MCF 10A (cell line): ENCODE measurements at regions of chr2 and their contacts with region 1.

Region 1: DNA sequence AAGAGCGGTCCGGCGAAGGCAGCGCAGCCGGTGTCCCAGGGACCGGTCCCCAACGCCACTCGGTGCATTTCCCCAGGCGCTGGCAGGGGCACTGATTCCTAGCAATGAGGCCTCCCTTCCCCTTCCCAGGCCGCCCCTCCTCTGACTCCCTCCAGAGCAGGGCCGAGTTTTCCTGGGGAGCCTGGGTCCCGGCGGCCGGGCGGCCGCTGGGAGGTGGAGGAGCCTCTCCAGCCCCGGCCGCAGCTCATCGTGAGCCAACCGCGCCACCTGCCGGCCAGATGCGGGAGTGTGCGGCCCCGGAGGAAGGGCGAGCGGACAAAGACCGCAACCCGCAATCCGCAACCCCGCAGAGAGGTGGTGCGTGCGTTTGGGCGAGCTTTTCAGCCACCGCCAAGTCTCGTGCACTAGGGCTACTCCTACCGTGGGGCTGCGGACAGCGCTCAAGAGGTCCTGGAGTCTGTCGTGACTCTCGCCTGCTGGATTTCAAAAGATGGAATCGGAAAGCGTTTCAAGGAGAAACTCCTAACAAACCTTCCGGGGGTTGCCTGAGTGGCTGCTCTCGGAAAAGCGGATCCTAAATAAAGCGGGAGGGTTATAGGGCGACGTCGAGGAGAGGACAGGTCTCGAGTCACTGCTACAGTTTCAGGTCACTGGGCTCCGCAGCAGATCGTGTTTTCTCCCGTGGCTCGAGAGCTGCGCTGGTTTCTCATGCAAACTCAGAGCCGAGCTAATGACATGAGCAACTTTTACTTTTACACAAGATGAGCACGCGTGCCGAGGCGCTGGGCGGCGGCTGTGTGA is 1.5 kb upstream of the EPHA4 start:
- DNase-seq: peak; percentile 80
- H3K4me3 Mint-ChIP-seq: peak overlapping the region; percentile 96
- H3K27ac Mint-ChIP-seq: peak overlapping the region; percentile 41
- H3K4me1 Mint-ChIP-seq: peaks cover 10% of the 10 kb centered on the region
- H3K27me3 Mint-ChIP-seq: no peaks in the 10 kb centered on the region
- CTCF ChIP-seq: peak; percentile 94

Region 2: GRCh38 chr2:219968685-219969345 is 1604.8 kb before region 1 on chr2:
- CTCF ChIA-PET with region 1: no interaction called
- POLR2A ChIA-PET with region 1: no interaction called
- intact Hi-C with region 1: loop called (anchors 1 kb)
- DNase-seq: peak; percentile 97
- H3K4me3 Mint-ChIP-seq: peak overlapping the region; percentile 35
- H3K27ac Mint-ChIP-seq: peak overlapping the region; percentile 61
- H3K4me1 Mint-ChIP-seq: peaks cover 17% of the 10 kb centered on the region
- H3K27me3 Mint-ChIP-seq: no peaks in the 10 kb centered on the region
- CTCF ChIP-seq: no peak

Region 3: DNA sequence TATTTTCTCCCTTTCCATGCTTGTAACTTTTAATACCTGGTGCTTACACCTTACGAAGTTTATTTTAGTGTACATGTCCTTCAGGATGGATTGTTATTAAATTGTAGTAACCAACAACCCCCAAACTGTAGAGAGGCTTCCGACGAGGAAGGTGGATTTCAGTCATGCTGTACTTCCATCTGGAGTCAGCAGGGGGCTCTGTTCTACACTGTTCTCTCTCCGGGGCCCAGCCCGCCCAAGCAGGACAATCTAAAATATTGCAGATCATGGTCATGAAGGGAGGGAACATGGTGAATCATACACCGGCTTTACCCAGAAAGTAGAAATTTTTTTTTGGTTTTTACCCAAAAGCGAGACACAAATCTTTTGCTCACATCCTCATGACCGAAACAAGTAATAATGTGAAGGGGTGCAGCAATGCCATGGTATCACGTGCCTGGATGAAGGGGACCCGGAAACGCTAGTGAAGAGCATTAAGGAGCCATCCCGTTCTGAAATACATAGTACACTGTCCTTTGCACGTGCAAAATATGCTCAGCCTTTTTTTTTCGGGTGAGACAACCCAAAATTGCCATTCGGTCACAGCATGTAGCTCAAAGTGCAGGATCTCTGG is 886.3 kb before region 1 on chr2:
- CTCF ChIA-PET with region 1: interaction called, 6 read pairs
- POLR2A ChIA-PET with region 1: no interaction called
- intact Hi-C with region 1: loop called (anchors 1 kb)
- DNase-seq: peak; percentile 68
- H3K4me3 Mint-ChIP-seq: no peak overlapping the region
- H3K27ac Mint-ChIP-seq: no peak overlapping the region
- H3K4me1 Mint-ChIP-seq: peaks cover 5% of the 10 kb centered on the region
- H3K27me3 Mint-ChIP-seq: no peaks in the 10 kb centered on the region
- CTCF ChIP-seq: peak; percentile 93

Region 4: DNA sequence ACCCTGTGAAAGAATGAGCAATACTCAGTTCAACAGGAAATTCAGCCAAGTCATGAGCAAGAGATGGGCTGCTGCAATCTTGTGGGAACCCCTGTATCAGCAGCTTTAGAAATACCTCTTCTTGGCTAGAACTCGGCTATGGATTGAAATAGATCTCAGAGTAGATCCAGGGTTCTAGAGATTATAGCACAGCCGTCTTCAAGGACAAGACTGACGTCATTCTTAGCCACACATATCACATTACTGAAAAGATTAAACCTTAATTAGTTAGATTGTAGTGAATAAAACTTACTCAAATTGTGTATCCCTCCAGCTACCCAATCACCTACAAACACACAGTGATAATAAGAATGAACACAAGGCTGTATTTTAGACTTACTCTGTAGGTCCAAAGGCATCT is 777.9 kb before region 1 on chr2:
- CTCF ChIA-PET with region 1: no interaction called
- POLR2A ChIA-PET with region 1: no interaction called
- intact Hi-C with region 1: loop called (anchors 5 kb)
- DNase-seq: no peak
- H3K4me3 Mint-ChIP-seq: no peak overlapping the region
- H3K27ac Mint-ChIP-seq: no peak overlapping the region
- H3K4me1 Mint-ChIP-seq: no peaks in the 10 kb centered on the region
- H3K27me3 Mint-ChIP-seq: no peaks in the 10 kb centered on the region
- CTCF ChIP-seq: no peak

Region 5: GRCh38 chr2:221309892-221310583 is 263.6 kb before region 1 on chr2:
- CTCF ChIA-PET with region 1: interaction called, 3 read pairs
- POLR2A ChIA-PET with region 1: no interaction called
- intact Hi-C with region 1: loop called (anchors 10 kb)
- DNase-seq: no peak
- H3K4me3 Mint-ChIP-seq: no peak overlapping the region
- H3K27ac Mint-ChIP-seq: no peak overlapping the region
- H3K4me1 Mint-ChIP-seq: no peaks in the 10 kb centered on the region
- H3K27me3 Mint-ChIP-seq: no peaks in the 10 kb centered on the region
- CTCF ChIP-seq: no peak

Region 6: GRCh38 chr2:221606424-221606823 is 32.8 kb after region 1 on chr2:
- CTCF ChIA-PET with region 1: no interaction called
- POLR2A ChIA-PET with region 1: no interaction called
- intact Hi-C with region 1: no loop called
- DNase-seq: no peak
- H3K4me3 Mint-ChIP-seq: no peak overlapping the region
- H3K27ac Mint-ChIP-seq: no peak overlapping the region
- H3K4me1 Mint-ChIP-seq: peaks cover 14% of the 10 kb centered on the region
- H3K27me3 Mint-ChIP-seq: no peaks in the 10 kb centered on the region
- CTCF ChIP-seq: no peak

Region 7: DNA sequence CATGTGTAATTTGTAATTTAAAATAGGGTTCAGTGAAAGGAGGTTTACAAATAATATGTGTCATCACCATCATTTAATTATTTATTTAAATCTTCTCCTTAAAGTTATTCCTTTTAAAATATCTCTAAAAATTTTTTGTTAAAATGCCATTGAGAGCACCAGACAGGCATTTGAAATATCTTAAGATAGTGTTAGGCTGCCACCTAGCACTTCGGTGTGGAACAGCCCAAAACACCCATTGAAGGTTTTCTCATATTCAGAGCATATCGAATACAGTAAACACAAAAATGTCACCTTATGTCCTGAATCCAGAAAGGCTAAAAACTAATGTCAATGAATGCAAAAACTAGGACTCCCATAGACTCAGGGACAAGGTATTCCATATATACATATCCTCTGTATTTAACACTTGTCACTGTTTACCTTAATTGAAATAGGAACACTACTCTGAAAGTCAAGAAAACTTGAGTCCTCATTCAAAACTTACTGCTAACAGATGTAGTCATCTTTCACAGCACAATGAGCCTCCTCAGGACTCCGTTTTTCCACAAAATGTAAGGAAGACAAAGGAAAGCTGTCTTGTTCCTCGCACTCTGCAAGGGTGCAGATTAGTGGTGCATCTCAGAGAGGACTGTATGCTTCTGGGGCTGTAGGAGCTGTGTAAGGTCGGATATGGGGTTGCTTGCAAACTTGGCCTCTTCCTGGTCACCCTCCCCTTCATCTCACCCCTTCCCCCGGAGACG is 395.6 kb after region 1 on chr2:
- CTCF ChIA-PET with region 1: interaction called, 7 read pairs
- POLR2A ChIA-PET with region 1: no interaction called
- intact Hi-C with region 1: loop called (anchors 1 kb)
- DNase-seq: peak; percentile 54
- H3K4me3 Mint-ChIP-seq: no peak overlapping the region
- H3K27ac Mint-ChIP-seq: no peak overlapping the region
- H3K4me1 Mint-ChIP-seq: no peaks in the 10 kb centered on the region
- H3K27me3 Mint-ChIP-seq: no peaks in the 10 kb centered on the region
- CTCF ChIP-seq: peak; percentile 64